Spleen (tissue), 13 donors: ENCODE measurements at regions of chr1 and their contacts with region 1.

Region 1: GRCh38 chr1:121458291-121459048 is 273.7 kb downstream of the SRGAP2C start:
- DNase-seq: no peak
- H3K4me3 ChIP-seq: peak overlapping the region in 3 of 8 donors; percentile 8 to 47 (median 11)
- H3K27ac ChIP-seq: peak overlapping the region in 5 of 8 donors; percentile 42 to 67 (median 57)
- H3K4me1 ChIP-seq: peaks cover 0 to 20% (median 14%) of the 10 kb centered on the region in 6 donors
- H3K27me3 ChIP-seq: no peaks in the 10 kb centered on the region
- CTCF ChIP-seq: no peak
- POLR2A ChIP-seq: no peak

Region 2: GRCh38 chr1:121519042-121519755 is 60.7 kb after region 1 on chr1:
- intact Hi-C with region 1: no loop called
- DNase-seq: peak; percentile 96
- H3K4me3 ChIP-seq: peak overlapping the region; percentile 56 to 92 (median 64)
- H3K27ac ChIP-seq: peak overlapping the region; percentile 52 to 93 (median 88)
- H3K4me1 ChIP-seq: peaks cover 3 to 52% (median 41%) of the 10 kb centered on the region in 6 donors
- H3K27me3 ChIP-seq: peaks cover 0 to 19% (median 7%) of the 10 kb centered on the region in 7 donors
- CTCF ChIP-seq: peak in 3 of 11 experiments; percentile 14 to 33 (median 21)
- POLR2A ChIP-seq: no peak

Region 3: DNA sequence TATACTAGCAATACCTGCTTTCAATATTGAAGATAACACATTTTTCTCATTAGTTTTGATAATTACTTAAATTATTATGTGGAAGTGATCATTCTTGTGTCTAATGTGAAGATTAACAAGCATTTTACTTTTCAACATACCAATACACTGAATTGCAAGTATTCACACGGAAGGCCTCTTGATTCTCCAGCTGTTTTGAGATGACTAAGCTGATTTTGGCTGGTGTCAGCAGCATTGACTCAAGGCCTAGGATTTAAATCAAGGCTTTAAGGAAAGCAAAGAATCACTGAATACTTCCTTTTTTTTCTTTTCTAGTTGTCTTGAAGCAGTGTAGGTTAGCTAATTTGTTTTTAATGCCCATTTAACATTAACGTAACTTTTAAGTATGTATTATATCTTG is 100.0 kb after region 1 on chr1:
- intact Hi-C with region 1: loop called (anchors 10 kb)
- DNase-seq: no peak
- H3K4me3 ChIP-seq: no peak overlapping the region
- H3K27ac ChIP-seq: peak overlapping the region in 2 of 8 donors; percentile 4 to 10
- H3K4me1 ChIP-seq: peaks cover 0 to 4% (median 0%) of the 10 kb centered on the region in 6 donors
- H3K27me3 ChIP-seq: no peaks in the 10 kb centered on the region
- CTCF ChIP-seq: no peak
- POLR2A ChIP-seq: no peak

Region 4: DNA sequence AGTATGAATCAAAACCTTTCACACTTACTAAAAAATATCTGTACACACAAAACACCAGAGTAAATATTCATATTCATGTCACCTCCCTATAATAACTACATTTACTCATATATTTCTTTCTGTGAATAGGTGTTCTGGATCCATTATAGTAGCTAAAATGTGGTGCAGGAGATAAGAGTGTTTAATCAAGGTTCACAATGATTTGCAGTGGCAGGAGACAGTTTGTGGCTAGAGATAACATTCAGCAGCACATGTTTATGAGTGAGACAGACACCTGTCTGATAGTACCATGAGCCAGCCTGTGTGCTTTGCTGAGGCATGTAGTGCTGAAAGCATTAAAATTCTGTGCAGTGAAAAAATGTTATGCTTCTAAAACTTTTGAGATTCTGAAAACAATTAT is 136.6 kb after region 1 on chr1:
- intact Hi-C with region 1: no loop called
- DNase-seq: no peak
- H3K4me3 ChIP-seq: no peak overlapping the region
- H3K27ac ChIP-seq: no peak overlapping the region
- H3K4me1 ChIP-seq: no peaks in the 10 kb centered on the region
- H3K27me3 ChIP-seq: no peaks in the 10 kb centered on the region
- CTCF ChIP-seq: no peak
- POLR2A ChIP-seq: no peak